Left lung (tissue), 14 donors: ENCODE measurements at regions of chr7 and their contacts with region 1.

Region 1: GRCh38 chr7:104497387-104497786 is 169.0 kb downstream of the LHFPL3 start:
- DNase-seq: no peak
- ATAC-seq: no peak
- H3K4me3 ChIP-seq: no peak overlapping the region
- H3K27ac ChIP-seq: no peak overlapping the region
- H3K4me1 ChIP-seq: no peaks in the 10 kb centered on the region
- H3K27me3 ChIP-seq: no peaks in the 10 kb centered on the region
- CTCF ChIP-seq: no peak

Region 2: GRCh38 chr7:104509874-104510273 is 12.5 kb after region 1 on chr7:
- intact Hi-C with region 1: loop called in 1 of 2 experiments (anchors 2 kb)
- DNase-seq: no peak
- ATAC-seq: no peak
- H3K4me3 ChIP-seq: no peak overlapping the region
- H3K27ac ChIP-seq: no peak overlapping the region
- H3K4me1 ChIP-seq: no peaks in the 10 kb centered on the region
- H3K27me3 ChIP-seq: no peaks in the 10 kb centered on the region
- CTCF ChIP-seq: no peak